Heart right ventricle (tissue), 16 donors: ENCODE measurements at regions of chr7 and their contacts with region 1.

Region 1: DNA sequence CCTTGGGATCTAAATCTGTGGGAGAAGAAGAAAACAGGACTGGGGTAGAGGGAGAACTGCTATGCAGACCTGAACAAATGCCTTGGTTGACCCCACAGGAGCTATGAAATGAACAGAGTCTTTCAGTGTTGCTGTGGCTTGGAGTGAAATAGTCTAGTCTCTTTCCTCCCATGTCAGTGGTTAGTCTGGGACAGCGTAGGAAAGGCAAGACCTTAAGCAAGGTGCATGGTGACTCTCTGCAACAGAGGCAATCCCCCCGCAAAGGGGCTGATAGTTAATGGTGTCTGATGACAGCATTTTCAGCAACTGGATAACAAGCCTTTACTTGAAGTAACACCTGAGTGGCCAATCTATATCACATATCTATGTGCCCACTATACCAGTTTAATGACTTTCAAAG is 62.3 kb downstream of the ARL4A start:
- DNase-seq: no peak
- ATAC-seq: no peak
- H3K4me3 ChIP-seq: no peak overlapping the region
- H3K27ac ChIP-seq: no peak overlapping the region
- H3K4me1 ChIP-seq: peaks cover 0 to 6% (median 4%) of the 10 kb centered on the region in 9 donors
- H3K27me3 ChIP-seq: no peaks in the 10 kb centered on the region
- CTCF ChIP-seq: no peak

Region 2: GRCh38 chr7:12738665-12739064 is 11.1 kb before region 1 on chr7:
- intact Hi-C with region 1: loop called in 1 of 10 experiments (anchors 1 kb)
- DNase-seq: no peak
- ATAC-seq: no peak
- H3K4me3 ChIP-seq: no peak overlapping the region
- H3K27ac ChIP-seq: no peak overlapping the region
- H3K4me1 ChIP-seq: peaks cover 0 to 23% (median 0%) of the 10 kb centered on the region in 9 donors
- H3K27me3 ChIP-seq: no peaks in the 10 kb centered on the region
- CTCF ChIP-seq: no peak

Region 3: GRCh38 chr7:12801121-12801520 is 51.4 kb after region 1 on chr7:
- intact Hi-C with region 1: no loop called
- DNase-seq: no peak
- ATAC-seq: peak in 2 of 8 donors; percentile 19 to 38
- H3K4me3 ChIP-seq: no peak overlapping the region
- H3K27ac ChIP-seq: peak overlapping the region in 2 of 10 donors; percentile 39 to 54
- H3K4me1 ChIP-seq: peaks cover 0 to 29% (median 17%) of the 10 kb centered on the region in 9 donors
- H3K27me3 ChIP-seq: no peaks in the 10 kb centered on the region
- CTCF ChIP-seq: no peak